ENCODE measurements at regions of chr19 and their contacts with region 1.

Region 1: DNA sequence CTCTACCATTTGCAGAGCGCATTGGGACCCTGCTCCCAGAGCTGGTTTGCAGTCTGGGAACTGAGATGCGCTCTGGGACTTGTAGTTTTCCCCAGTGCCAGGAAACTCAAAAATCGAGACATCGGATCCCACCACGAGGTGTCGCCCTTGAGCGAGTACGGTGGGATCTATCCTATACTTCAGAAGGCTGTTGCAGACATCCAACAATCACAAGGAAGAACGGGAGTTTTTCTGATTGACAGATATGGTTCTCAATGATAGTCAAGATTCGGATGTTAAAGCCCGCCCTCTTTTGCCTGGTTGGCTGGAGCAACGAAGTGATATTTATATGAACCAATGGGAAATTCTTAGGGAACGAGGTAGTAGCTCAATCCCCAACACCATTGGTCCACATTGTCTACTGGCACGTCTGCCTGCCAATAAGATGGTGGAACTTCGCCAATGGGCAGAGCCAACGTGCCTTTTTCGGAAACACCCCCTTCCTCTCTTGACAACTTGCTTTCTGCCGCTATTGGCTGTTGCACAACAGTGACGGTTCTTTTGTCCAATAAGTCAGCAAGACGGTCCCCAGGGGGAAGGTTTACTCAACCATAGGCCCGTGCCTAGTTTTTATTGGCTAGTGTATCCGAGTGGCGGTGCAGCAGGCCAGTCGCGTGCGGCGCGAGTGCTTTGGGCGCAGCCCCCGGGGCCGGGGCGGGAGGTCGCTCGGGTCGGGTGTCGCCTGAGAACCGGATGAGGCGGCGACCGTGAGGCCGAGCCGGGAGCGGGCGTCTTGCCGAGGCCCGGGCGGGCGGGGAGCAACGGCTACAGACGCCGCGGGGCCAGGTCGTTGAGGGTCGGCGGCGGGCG is at the start of gene DNM2:
- DNase-seq: peak; percentile 100
- H3K4me3 ChIP-seq: peak within 1 kb of the TSS; percentile 95
- H3K27ac ChIP-seq: peak within 1 kb of the TSS; percentile 85
- H3K4me1 ChIP-seq: peaks cover 4% of the 10 kb centered on the region
- H3K27me3 ChIP-seq: no peaks in the 10 kb centered on the region
- CTCF ChIP-seq: peak; percentile 91
- total RNA-seq, gene DNM2: 143 and 155 TPM in 2 replicates

Region 2: GRCh38 chr19:10690341-10690781 is 27.2 kb before region 1 on chr19:
- CTCF ChIA-PET with region 1: no interaction called
- POLR2A ChIA-PET with region 1: no interaction called
- intact Hi-C with region 1: no loop called
- DNase-seq: peak; percentile 51
- H3K4me3 ChIP-seq: no peak overlapping the region
- H3K27ac ChIP-seq: no peak overlapping the region
- H3K4me1 ChIP-seq: peaks cover 5% of the 10 kb centered on the region
- H3K27me3 ChIP-seq: no peaks in the 10 kb centered on the region
- CTCF ChIP-seq: no peak

Region 3: DNA sequence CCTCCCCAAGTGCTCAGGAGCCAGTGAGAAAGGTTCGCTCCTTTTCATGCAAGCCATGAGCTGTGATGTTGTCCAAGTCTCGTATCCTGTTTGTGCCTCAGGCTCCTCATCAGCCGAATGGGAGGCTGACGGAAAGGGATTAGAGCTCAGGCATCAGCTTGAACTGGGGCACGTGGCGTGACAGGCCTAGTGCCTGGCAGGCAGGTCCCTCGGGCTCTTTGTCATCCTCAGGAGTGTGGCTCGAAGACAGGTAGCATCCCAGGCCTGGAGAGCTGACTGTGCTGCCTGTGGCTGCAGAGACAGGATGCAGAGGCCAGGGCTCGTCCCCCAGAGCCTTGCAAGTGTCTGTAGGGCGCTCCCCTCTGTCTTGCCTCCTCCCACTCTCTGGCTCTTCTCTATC is 38.8 kb after region 1 on chr19:
- CTCF ChIA-PET with region 1: no interaction called
- POLR2A ChIA-PET with region 1: no interaction called
- intact Hi-C with region 1: loop called (anchors 5 kb)
- DNase-seq: no peak
- H3K4me3 ChIP-seq: no peak overlapping the region
- H3K27ac ChIP-seq: no peak overlapping the region
- H3K4me1 ChIP-seq: peaks cover 13% of the 10 kb centered on the region
- H3K27me3 ChIP-seq: no peaks in the 10 kb centered on the region
- CTCF ChIP-seq: no peak

Region 4: DNA sequence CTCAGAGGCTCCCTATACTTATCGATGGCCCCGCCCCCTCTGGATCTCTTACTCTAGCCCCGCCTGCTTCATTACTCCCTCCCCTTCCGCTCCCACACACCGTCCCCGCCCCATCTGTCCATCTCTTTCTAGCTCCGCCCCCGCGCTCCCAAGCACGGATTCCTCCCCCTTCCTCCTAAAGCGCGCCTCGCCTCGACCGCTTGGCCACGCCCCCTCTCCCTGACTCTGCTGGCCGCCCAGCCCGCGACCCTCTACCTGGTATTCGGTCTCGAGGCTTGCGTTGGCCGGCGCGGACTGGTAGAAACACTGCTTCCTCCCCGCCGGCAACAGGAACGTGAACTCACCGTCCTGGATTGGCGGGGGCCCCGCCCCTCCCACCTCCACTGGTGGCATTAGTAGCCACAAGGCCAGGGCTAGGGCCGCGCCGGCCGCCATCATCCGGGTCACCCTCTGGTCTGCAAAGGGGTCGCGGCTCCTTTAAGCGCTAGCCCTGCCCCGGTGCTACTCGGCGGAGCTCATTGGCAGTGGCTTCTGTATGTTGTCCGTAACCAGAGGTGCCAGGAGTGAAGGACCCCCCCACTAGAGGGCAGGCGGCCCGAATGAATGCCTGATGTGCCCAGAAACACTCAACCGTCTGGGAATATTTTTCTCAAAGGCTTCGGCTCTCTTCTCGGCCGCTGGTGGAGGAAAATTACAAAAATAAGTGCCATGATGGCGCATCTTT is 118.3 kb after region 1 on chr19 and contains the start of gene TMED1:
- CTCF ChIA-PET with region 1: interaction called, 7 read pairs
- POLR2A ChIA-PET with region 1: no interaction called
- intact Hi-C with region 1: loop called (anchors 5 kb)
- DNase-seq: peak; percentile 100
- H3K4me3 ChIP-seq: peak within 1 kb of the TSS; percentile 60
- H3K27ac ChIP-seq: peak within 1 kb of the TSS; percentile 98
- H3K4me1 ChIP-seq: no peaks in the 10 kb centered on the region
- H3K27me3 ChIP-seq: no peaks in the 10 kb centered on the region
- CTCF ChIP-seq: peak; percentile 42
- total RNA-seq, gene TMED1: 23.1 and 27.3 TPM in 2 replicates

Region 5: DNA sequence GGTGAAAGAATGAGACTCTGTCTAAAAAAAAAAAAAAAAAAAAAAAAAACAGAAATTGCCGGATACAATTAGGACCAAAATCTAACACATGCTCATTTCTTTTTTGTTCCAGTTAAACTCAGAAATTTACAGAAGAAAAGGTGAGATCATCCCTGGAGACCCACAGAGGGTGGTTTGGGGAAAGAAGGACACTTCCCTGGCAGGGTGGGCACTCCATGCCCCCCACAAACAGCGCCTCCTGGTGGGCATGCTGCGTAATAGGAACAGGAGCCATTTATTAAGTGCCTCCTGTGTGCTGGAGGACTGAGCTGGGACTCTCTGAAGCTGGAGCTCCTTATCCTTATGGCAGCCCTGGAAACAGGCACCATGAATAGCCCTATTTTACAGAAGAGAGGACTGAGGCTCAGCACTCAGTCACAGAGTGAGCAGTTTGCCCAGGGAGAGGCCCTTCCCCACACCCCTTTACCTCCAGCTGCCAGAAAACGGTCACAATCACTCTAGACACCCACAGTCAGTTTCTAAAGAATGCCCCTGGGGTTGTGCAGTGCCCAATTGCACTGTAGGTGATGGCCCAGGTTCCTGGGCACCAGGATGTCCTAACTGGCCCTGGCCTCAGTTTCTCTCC is 140.7 kb after region 1 on chr19:
- CTCF ChIA-PET with region 1: interaction called, 16 read pairs
- POLR2A ChIA-PET with region 1: no interaction called
- intact Hi-C with region 1: no loop called
- DNase-seq: peak; percentile 66
- H3K4me3 ChIP-seq: no peak overlapping the region
- H3K27ac ChIP-seq: no peak overlapping the region
- H3K4me1 ChIP-seq: peaks cover 4% of the 10 kb centered on the region
- H3K27me3 ChIP-seq: no peaks in the 10 kb centered on the region
- CTCF ChIP-seq: peak; percentile 94

Region 6: GRCh38 chr19:10864538-10864899 is 146.9 kb after region 1 on chr19:
- CTCF ChIA-PET with region 1: interaction called, 46 read pairs
- POLR2A ChIA-PET with region 1: no interaction called
- intact Hi-C with region 1: loop called (anchors 1 kb)
- DNase-seq: peak; percentile 85
- H3K4me3 ChIP-seq: no peak overlapping the region
- H3K27ac ChIP-seq: no peak overlapping the region
- H3K4me1 ChIP-seq: peaks cover 8% of the 10 kb centered on the region
- H3K27me3 ChIP-seq: no peaks in the 10 kb centered on the region
- CTCF ChIP-seq: peak; percentile 97

Region 7: DNA sequence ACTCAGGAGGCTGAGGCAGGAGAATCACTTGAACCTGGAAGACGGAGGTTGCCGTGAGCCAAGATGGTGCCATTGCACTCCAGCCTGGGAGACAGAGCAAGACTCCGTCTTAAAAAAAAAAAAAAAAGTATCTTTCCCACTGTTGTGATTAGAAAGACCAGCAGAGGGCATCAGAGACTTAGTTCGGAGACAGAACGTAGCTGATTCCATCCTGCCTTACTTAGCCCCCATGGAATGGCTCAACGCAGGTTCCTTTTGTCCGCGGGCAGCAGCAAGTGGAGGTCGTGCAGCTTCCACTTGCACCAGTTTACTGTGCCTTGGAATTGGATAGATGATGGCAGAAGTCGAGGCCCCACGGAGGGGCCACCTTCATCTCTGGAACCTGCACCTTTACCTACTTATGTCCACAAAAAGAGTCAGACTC is 219.1 kb after region 1 on chr19:
- CTCF ChIA-PET with region 1: no interaction called
- POLR2A ChIA-PET with region 1: no interaction called
- intact Hi-C with region 1: no loop called
- DNase-seq: peak; percentile 89
- H3K4me3 ChIP-seq: peak overlapping the region; percentile 15
- H3K27ac ChIP-seq: no peak overlapping the region
- H3K4me1 ChIP-seq: no peaks in the 10 kb centered on the region
- H3K27me3 ChIP-seq: no peaks in the 10 kb centered on the region
- CTCF ChIP-seq: peak; percentile 64